ENCODE measurements at regions of chr1 and their contacts with region 1.

Region 1: DNA sequence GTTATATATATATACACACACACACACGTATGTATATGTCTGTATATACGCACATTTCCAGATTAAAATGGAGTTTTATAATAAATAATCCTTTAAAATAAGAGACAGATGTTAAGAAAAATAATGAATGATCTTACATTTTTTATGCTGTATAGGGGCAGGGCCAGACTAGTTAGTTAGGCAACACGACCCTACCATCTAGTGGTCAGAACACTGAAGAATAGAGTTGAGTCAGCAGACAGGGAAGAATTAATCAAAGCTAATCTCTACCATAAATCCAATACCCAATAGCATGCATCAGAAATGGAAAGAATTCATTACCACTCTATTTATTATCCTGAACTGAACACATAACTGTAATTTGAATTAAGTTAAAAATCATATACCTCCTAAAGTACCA is 156.7 kb downstream of the BRINP3 start:
- DNase-seq: peak; percentile 28
- ATAC-seq: peak; percentile 84
- H3K4me3 ChIP-seq: no peak overlapping the region
- H3K27ac ChIP-seq: no peak overlapping the region
- H3K4me1 ChIP-seq: no peaks in the 10 kb centered on the region
- H3K27me3 ChIP-seq: no peaks in the 10 kb centered on the region
- CTCF ChIP-seq: peak; percentile 25 to 50 (median 31); a peak in 4 of 6 replicates
- POLR2A ChIP-seq: no peak
- RAD21 ChIP-seq: peak; percentile 70

Region 2: GRCh38 chr1:189708674-189709073 is 612.3 kb before region 1 on chr1:
- CTCF ChIA-PET with region 1: interaction called, 17 read pairs
- POLR2A ChIA-PET with region 1: no interaction called
- RAD21 ChIA-PET with region 1: interaction called in 1 of 2 experiments, 3 read pairs
- intact Hi-C with region 1: loop called (anchors 2 kb)
- DNase-seq: peak; percentile 7
- ATAC-seq: peak; percentile 88
- H3K4me3 ChIP-seq: no peak overlapping the region
- H3K27ac ChIP-seq: no peak overlapping the region
- H3K4me1 ChIP-seq: no peaks in the 10 kb centered on the region
- H3K27me3 ChIP-seq: no peaks in the 10 kb centered on the region
- CTCF ChIP-seq: peak; percentile 18 to 40 (median 37); a peak in 4 of 6 replicates
- POLR2A ChIP-seq: no peak
- RAD21 ChIP-seq: peak; percentile 63

Region 3: DNA sequence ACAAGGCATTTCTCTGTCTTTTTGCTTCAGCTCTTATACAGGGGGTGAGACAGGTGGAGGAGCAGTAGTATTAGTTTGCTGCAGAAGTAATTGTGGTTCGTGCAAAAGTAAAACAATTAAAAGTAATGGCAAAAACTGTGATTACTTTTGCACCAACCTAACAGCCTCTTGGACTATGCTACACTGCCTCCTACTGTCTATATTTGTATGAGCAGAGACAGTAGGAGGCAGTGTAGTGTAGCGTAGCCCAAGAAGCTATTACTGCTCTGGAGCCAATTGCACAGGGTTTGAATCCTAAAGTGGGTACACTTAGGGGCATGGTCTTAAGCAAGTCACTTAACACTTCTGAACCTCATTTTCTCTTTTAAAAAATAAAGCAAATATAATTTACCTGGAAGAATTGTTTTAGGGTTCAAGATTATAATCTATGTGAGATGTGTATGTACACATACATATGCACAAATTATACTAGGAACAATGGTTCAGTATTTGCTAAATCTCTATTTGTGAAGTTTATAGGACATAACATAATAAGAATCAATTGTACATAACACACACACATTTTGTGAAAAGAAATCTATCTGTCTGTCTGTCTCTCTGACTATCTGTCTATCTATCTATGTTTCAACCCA is 52.9 kb after region 1 on chr1:
- CTCF ChIA-PET with region 1: no interaction called
- POLR2A ChIA-PET with region 1: no interaction called
- RAD21 ChIA-PET with region 1: no interaction called
- intact Hi-C with region 1: loop called (anchors 1 kb)
- DNase-seq: peak; percentile 15
- ATAC-seq: peak; percentile 93
- H3K4me3 ChIP-seq: no peak overlapping the region
- H3K27ac ChIP-seq: no peak overlapping the region
- H3K4me1 ChIP-seq: no peaks in the 10 kb centered on the region
- H3K27me3 ChIP-seq: no peaks in the 10 kb centered on the region
- CTCF ChIP-seq: peak; percentile 68 to 97 (median 87)
- POLR2A ChIP-seq: no peak
- RAD21 ChIP-seq: peak; percentile 74

Region 4: GRCh38 chr1:190475421-190476141 is 154.6 kb after region 1 on chr1:
- CTCF ChIA-PET with region 1: no interaction called
- POLR2A ChIA-PET with region 1: no interaction called
- RAD21 ChIA-PET with region 1: no interaction called
- intact Hi-C with region 1: no loop called
- DNase-seq: no peak
- ATAC-seq: no peak
- H3K4me3 ChIP-seq: no peak overlapping the region
- H3K27ac ChIP-seq: no peak overlapping the region
- H3K4me1 ChIP-seq: peaks cover 4 to 15% of the 10 kb centered on the region in 2 experiments; a peak in 3 of 4 replicates
- H3K27me3 ChIP-seq: no peaks in the 10 kb centered on the region
- CTCF ChIP-seq: no peak
- POLR2A ChIP-seq: no peak
- RAD21 ChIP-seq: no peak

Measured in HCT116 (cell line).